Common myeloid progenitor, CD34-positive (primary cell): ENCODE measurements at regions of chr2 and their contacts with region 1.

Region 1: GRCh38 chr2:160994141-160995002 is 165.9 kb upstream of the TANK start:
- DNase-seq: peak; percentile 82 to 92 (median 90)
- H3K4me3 ChIP-seq: peak overlapping the region in 1 of 7 experiments; percentile 34
- H3K27ac ChIP-seq: no peak overlapping the region
- H3K4me1 ChIP-seq: peaks cover 0 to 8% (median 0%) of the 10 kb centered on the region in 4 experiments
- H3K27me3 ChIP-seq: no peaks in the 10 kb centered on the region

Region 2: GRCh38 chr2:160977376-160977775 is 17.0 kb before region 1 on chr2:
- CTCF ChIA-PET with region 1: interaction called, 11 read pairs
- POLR2A ChIA-PET with region 1: no interaction called
- DNase-seq: no peak
- H3K4me3 ChIP-seq: no peak overlapping the region
- H3K27ac ChIP-seq: no peak overlapping the region
- H3K4me1 ChIP-seq: peaks cover 0 to 4% (median 0%) of the 10 kb centered on the region in 4 experiments
- H3K27me3 ChIP-seq: no peaks in the 10 kb centered on the region

Region 3: DNA sequence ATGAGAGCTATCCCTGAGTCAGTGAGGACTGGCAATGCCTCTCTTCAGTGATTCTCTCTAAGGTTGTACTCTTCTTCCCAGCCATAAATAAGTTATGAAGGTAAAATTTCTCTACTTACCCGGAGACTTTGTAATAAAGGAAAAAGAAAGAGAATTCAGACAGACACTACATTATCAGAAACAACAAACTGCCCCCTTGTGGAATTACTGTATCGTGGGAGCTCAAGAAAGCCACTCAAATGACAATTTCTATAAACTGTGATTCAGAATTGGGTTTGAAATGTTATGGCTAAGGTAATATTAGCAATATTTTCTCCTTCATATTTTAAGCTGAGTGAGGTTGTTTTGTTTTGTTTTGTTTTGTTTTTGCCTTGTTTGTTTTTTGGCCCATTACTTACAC is 10.0 kb after region 1 on chr2:
- CTCF ChIA-PET with region 1: interaction called, 12 read pairs
- POLR2A ChIA-PET with region 1: no interaction called
- DNase-seq: peak in 2 of 3 donors; percentile 8 to 19
- H3K4me3 ChIP-seq: no peak overlapping the region
- H3K27ac ChIP-seq: no peak overlapping the region
- H3K4me1 ChIP-seq: no peaks in the 10 kb centered on the region
- H3K27me3 ChIP-seq: peaks cover 0 to 2% (median 0%) of the 10 kb centered on the region in 5 experiments

Region 4: DNA sequence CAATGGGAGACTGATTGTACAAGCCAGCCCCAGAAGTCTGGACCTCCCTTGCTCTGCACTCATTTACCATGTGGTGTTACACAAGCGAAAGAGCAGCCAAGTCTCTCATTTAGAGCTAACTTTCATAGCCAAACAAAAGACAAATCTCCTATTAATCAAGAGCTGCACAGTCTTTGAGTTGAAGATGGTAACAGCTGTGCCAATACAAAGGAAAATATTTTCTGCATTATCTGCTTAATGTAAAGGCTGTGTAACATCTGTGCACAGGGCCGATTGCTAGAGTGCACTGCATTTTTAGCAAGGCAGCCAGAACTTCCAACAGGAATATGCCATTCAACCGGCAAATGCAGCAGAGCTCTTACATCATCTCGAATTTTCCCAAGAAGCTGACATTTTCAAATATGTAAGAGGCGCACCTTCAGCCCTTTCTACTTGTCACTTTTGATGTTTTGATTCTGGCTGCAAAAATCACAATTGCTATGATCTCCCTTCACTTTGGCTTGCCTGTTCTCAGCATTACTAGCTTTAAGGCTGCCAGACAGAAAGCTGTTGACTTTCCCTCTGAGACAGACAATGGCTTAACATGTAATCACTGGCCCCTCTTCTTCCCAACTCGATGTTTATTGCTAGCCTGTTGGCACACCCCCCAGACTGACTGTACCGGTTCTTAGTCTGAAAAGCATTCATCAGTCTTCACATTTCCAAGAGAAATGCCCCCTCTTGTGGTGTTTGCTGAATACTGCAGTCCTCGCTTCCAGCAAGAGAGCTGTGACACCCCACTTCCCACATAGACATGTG is 69.0 kb after region 1 on chr2:
- CTCF ChIA-PET with region 1: interaction called, 11 read pairs
- POLR2A ChIA-PET with region 1: no interaction called
- DNase-seq: peak; percentile 73 to 80 (median 75)
- H3K4me3 ChIP-seq: no peak overlapping the region
- H3K27ac ChIP-seq: no peak overlapping the region
- H3K4me1 ChIP-seq: no peaks in the 10 kb centered on the region
- H3K27me3 ChIP-seq: no peaks in the 10 kb centered on the region